ENCODE measurements at regions of chr17 and their contacts with region 1.

Region 1: GRCh38 chr17:8894673-8895578 is 27.5 kb upstream of the PIK3R6 start:
- DNase-seq: peak; percentile 39
- ATAC-seq: peak; percentile 93
- H3K4me3 ChIP-seq: no peak overlapping the region
- H3K27ac ChIP-seq: no peak overlapping the region
- H3K4me1 ChIP-seq: peaks cover 0 to 5% of the 10 kb centered on the region in 2 experiments; a peak in 1 of 4 replicates
- H3K27me3 ChIP-seq: no peaks in the 10 kb centered on the region
- CTCF ChIP-seq: peak; percentile 57 to 80 (median 77); a peak in 5 of 6 replicates
- POLR2A ChIP-seq: no peak
- RAD21 ChIP-seq: peak; percentile 80

Region 2: DNA sequence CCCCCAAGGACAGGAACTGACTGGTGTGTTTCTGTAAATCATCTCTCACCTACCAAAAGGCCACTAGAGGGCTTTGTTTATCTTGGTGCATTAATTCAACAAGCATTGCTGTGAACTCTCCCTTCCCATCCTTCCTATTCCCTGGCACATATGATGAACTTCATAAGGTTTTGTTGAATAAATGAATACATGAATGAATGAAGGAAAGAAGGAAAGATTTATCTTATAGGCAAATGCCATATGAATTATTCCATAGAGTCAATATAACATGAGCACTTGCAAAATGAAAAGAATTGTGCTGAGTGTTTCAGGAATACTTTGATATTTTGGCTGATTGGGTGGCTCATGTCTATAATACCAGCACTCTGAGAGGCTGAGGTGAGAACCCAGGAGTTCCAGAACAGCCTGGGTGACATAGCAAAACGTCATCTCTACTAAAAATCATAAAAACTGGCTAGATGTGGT is 140.9 kb before region 1 on chr17:
- CTCF ChIA-PET with region 1: interaction called, 3 read pairs
- POLR2A ChIA-PET with region 1: no interaction called
- RAD21 ChIA-PET with region 1: no interaction called
- intact Hi-C with region 1: loop called (anchors 2 kb)
- DNase-seq: peak; percentile 31
- ATAC-seq: peak; percentile 88
- H3K4me3 ChIP-seq: no peak overlapping the region
- H3K27ac ChIP-seq: no peak overlapping the region
- H3K4me1 ChIP-seq: no peaks in the 10 kb centered on the region
- H3K27me3 ChIP-seq: no peaks in the 10 kb centered on the region
- CTCF ChIP-seq: peak; percentile 50 to 73 (median 60); a peak in 5 of 6 replicates
- POLR2A ChIP-seq: no peak
- RAD21 ChIP-seq: peak; percentile 55; the same call in 1 of the 2 replicates

Region 3: DNA sequence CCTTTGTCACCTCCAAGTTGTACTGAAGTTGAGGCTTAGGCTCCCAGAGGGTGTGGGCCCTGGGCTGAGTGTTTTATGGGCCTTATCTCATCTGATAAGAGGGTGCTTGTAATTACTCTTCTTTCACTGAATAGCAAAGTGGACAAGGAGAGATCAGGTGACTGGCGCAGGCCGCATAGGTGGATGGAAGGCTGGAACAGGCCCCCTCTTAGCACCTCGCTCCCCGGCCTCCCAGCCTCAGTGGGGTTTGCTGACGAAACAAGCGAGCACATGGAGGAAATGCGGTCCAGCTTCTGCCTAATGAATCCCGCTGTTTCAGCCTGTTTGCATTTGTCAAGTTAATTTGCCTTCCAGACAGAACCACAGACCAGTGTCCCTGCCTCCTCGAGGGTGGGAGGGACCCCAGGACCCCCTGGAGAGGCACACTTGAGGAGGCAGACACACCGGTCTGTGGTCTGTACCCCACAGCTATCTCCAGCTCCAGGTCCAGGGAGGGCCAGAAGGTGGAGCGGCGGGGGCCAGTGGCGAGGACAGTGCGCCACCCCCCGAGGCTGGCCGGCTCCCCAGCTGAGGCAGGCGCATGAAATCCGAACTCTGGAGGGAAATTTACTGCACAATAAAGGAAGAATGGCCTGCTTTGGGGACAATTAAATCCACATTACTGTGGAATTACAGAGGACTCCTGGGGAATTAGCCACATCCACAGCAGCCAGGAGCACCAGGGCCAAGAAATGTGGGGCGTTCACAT is 249.8 kb after region 1 on chr17:
- CTCF ChIA-PET with region 1: no interaction called
- POLR2A ChIA-PET with region 1: no interaction called
- RAD21 ChIA-PET with region 1: no interaction called
- intact Hi-C with region 1: no loop called
- DNase-seq: no peak
- ATAC-seq: no peak
- H3K4me3 ChIP-seq: no peak overlapping the region
- H3K27ac ChIP-seq: no peak overlapping the region
- H3K4me1 ChIP-seq: no peaks in the 10 kb centered on the region
- H3K27me3 ChIP-seq: no peaks in the 10 kb centered on the region
- CTCF ChIP-seq: no peak
- POLR2A ChIP-seq: no peak
- RAD21 ChIP-seq: no peak